ENCODE measurements at regions of chr3 and their contacts with region 1.

Region 1: DNA sequence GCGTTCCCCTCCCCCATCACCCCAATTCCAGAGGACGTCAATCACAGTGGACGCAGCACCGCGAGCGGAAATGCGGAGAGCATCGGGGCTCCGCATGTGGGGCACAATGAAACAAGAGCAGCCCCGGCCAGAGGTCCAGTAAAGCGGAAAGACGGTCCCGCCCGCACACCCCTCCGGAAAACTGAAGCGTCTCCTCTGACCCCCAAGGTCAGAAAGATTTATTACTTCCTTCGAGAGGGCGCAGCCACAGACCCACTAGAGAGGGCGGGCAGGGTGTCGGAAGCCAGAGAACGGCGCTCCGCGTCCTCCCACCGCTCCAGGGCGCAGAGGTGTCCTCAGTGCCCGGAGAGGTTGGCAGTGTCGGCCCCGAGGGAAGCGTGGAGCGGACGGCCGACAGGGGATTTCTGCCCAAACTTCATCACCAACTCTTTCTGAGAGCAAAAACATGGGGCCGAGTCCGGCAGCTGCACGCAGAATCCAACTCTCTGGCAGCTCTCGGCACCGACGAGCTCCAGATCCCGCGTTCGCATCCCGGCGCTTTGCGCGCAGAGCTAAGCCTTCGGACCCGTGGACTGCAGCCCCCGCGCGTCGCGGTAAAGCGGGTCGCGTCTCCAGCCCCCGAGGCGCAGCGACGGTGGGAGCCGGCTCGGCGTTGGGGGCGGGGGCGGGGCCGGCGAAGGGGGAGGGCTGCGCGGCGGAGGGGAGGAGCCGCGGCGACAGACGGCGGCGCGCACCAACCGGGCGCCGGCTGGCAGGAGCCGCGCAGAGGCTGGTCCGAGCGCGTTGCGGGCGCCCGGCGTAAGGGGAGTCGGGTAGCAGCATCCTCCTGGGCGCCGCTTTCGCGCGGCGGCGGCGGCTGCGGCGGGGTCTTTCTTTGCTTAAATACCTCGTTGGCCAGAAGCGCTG is at the start of gene CHST2:
- DNase-seq: peak; percentile 77
- ATAC-seq: peak; percentile 89
- H3K4me3 Mint-ChIP-seq: peak within 1 kb of the TSS; percentile 90
- H3K27ac Mint-ChIP-seq: peak within 1 kb of the TSS; percentile 78
- H3K4me1 Mint-ChIP-seq: peaks cover 32% of the 10 kb centered on the region
- H3K27me3 Mint-ChIP-seq: no peaks in the 10 kb centered on the region
- CTCF ChIP-seq: no peak
- total RNA-seq, gene CHST2: 11.8 and 12.3 TPM in 2 replicates

Region 2: GRCh38 chr3:143084856-143085731 is 34.2 kb before region 1 on chr3:
- CTCF ChIA-PET with region 1: interaction called, 3 read pairs
- POLR2A ChIA-PET with region 1: interaction called, 17 read pairs
- intact Hi-C with region 1: loop called (anchors 1 kb)
- DNase-seq: peak; percentile 19
- ATAC-seq: peak; percentile 53
- H3K4me3 Mint-ChIP-seq: no peak overlapping the region
- H3K27ac Mint-ChIP-seq: peak overlapping the region; percentile 14
- H3K4me1 Mint-ChIP-seq: peaks cover 31% of the 10 kb centered on the region
- H3K27me3 Mint-ChIP-seq: no peaks in the 10 kb centered on the region
- CTCF ChIP-seq: no peak

Region 3: GRCh38 chr3:143103652-143104051 is 15.6 kb before region 1 on chr3:
- CTCF ChIA-PET with region 1: no interaction called
- POLR2A ChIA-PET with region 1: no interaction called
- intact Hi-C with region 1: no loop called
- DNase-seq: no peak
- ATAC-seq: no peak
- H3K4me3 Mint-ChIP-seq: no peak overlapping the region
- H3K27ac Mint-ChIP-seq: no peak overlapping the region
- H3K4me1 Mint-ChIP-seq: peaks cover 3% of the 10 kb centered on the region
- H3K27me3 Mint-ChIP-seq: peaks cover 5% of the 10 kb centered on the region
- CTCF ChIP-seq: no peak

Region 4: DNA sequence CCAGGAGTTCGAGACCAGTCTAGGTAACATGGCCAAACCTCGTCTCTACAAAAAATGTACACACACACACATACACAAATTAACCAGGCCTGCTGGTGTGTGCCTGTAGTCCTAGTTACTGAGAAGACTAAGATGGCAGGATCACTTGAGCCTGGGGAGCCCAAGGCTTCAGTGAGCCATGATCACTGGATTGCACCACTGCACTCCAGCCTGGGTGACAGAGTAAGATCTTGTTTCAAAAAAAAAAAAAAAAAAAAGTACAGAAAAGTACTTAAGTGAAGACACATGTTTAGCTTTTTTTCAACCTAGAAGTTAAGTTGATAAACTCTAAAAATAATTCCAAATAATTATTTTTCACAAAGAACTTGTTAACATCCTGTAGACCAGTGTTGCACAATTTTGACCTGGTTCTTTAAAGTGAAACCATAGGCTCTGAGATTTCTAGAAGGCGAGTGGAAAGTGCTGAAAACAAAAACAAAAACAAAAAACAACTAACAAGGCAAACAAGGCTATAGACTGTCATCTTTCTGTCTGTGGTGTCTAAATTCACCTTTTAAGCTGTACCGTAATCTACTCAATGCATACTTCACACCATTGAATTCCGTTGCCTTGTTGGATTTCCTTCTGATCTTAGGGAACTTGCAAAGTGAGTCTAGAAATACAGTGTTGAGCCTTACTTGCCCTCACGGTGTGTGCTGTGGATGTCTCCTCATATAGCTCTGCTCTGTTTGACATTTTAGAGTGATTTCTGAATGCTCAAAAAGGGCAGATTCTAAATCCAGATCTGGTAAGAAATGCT is 63.8 kb after region 1 on chr3:
- CTCF ChIA-PET with region 1: no interaction called
- POLR2A ChIA-PET with region 1: interaction called, 4 read pairs
- intact Hi-C with region 1: loop called (anchors 1 kb)
- DNase-seq: no peak
- ATAC-seq: no peak
- H3K4me3 Mint-ChIP-seq: no peak overlapping the region
- H3K27ac Mint-ChIP-seq: no peak overlapping the region
- H3K4me1 Mint-ChIP-seq: peaks cover 49% of the 10 kb centered on the region
- H3K27me3 Mint-ChIP-seq: no peaks in the 10 kb centered on the region
- CTCF ChIP-seq: no peak

Region 5: DNA sequence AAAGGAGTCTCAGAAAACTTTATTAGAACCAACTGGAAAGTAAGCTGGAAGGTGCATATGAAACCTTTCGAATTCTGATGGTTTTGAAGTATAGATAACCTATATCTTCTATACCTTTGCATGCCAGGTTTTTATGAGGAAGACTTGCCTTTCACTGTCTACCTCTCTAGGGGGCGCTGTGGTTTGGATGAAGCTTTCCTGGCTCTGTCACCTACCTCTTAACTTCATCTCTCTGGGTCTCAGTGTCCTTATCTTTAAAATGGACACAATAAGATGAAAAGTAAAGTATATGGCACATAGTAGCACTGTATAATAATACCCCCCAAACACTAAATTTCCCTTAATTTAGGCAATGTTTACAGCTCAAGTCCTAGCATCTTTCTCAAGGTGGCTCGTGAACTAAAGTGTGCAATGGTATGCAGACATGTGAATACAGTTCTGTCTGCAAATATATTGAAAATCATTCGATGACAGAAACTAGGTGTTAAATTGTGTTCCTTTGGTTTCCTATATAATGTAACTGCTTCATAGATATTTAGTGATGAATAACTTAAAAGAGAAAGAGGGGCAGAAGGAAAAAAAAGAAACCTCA is 314.6 kb after region 1 on chr3:
- CTCF ChIA-PET with region 1: interaction called, 4 read pairs
- POLR2A ChIA-PET with region 1: no interaction called
- intact Hi-C with region 1: loop called (anchors 5 kb)
- DNase-seq: no peak
- ATAC-seq: no peak
- H3K4me3 Mint-ChIP-seq: no peak overlapping the region
- H3K27ac Mint-ChIP-seq: no peak overlapping the region
- H3K4me1 Mint-ChIP-seq: peaks cover 24% of the 10 kb centered on the region
- H3K27me3 Mint-ChIP-seq: no peaks in the 10 kb centered on the region
- CTCF ChIP-seq: no peak

Region 6: DNA sequence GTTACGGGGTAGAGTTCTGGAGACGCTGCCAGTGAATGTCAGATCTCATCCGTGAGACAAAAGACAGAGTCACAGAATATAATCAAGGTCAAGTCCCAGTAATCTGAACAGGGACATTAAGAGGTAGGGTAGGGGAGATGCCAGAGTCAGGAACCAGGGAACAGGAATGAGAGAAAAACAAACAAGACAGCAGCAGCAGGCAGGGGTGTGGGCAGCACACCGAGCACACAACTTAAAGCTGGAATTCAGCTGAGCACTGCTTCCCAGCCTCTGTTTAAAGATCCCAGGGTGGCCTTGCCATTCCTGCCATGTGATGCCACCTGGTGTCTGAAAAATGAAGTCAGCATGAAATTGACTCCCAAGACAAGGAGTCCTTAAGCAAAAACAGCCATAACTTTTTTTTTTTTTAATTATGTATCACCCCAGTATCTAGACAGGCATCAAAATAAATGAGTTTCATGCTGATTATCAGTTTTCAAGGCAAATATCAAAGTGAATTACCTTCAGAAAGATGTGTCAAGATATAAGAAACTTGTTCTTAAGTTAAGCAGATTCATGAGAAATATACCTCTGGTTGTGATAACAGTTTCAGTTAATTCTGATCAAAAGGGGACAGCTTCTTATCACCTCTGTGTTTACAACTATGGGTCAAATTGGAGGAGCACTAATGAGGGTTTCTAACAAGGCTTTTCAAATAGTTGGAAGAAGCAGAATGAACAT is 525.3 kb after region 1 on chr3:
- CTCF ChIA-PET with region 1: interaction called, 4 read pairs
- POLR2A ChIA-PET with region 1: interaction called, 3 read pairs
- intact Hi-C with region 1: loop called (anchors 1 kb)
- DNase-seq: no peak
- ATAC-seq: peak; percentile 45
- H3K4me3 Mint-ChIP-seq: no peak overlapping the region
- H3K27ac Mint-ChIP-seq: peak overlapping the region; percentile 50
- H3K4me1 Mint-ChIP-seq: peaks cover 14% of the 10 kb centered on the region
- H3K27me3 Mint-ChIP-seq: no peaks in the 10 kb centered on the region
- CTCF ChIP-seq: no peak